MCF 10A (cell line): ENCODE measurements at regions of chr20 and their contacts with region 1.

Region 1: GRCh38 chr20:18252597-18253451 is 35.5 kb upstream of the ZNF133 start:
- DNase-seq: peak; percentile 91
- H3K4me3 Mint-ChIP-seq: peak overlapping the region; percentile 52
- H3K27ac Mint-ChIP-seq: peak overlapping the region; percentile 100
- H3K4me1 Mint-ChIP-seq: peaks cover 30% of the 10 kb centered on the region
- H3K27me3 Mint-ChIP-seq: no peaks in the 10 kb centered on the region
- CTCF ChIP-seq: no peak

Region 2: DNA sequence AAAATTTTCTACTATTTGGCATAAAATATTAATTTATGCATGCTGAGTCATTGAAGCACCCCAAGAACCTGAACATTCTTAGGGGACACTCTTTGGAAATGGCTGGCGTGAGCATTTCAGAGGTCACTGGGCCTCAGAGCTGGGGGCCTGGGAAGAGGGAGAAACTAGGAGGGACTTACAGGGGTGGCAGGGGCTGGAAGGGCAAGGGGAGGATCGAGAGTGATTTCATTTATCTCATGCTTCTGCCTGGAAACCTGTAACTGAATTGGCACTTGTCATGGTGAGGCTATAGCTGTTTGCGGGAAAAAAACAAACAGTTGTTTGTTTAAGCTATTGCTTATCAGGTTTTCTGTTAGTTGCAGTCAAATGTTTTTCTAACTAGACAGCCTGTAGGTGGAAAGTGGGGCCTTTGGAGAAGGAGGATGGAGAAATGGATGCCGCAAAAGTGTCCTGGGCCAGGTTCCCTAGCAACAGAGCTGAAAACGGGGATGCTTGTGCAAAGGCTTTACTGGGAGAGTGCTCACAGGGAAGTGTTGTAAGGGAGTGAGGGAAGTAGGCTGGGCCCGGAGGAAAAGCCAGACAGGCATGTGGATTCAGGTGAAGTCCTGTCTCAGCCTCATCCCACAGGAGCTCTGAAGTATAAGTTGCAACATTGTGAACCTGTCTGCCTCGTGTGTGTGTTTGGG is 151.6 kb before region 1 on chr20:
- CTCF ChIA-PET with region 1: no interaction called
- POLR2A ChIA-PET with region 1: no interaction called
- intact Hi-C with region 1: no loop called
- DNase-seq: no peak
- H3K4me3 Mint-ChIP-seq: no peak overlapping the region
- H3K27ac Mint-ChIP-seq: no peak overlapping the region
- H3K4me1 Mint-ChIP-seq: no peaks in the 10 kb centered on the region
- H3K27me3 Mint-ChIP-seq: no peaks in the 10 kb centered on the region
- CTCF ChIP-seq: no peak

Region 3: DNA sequence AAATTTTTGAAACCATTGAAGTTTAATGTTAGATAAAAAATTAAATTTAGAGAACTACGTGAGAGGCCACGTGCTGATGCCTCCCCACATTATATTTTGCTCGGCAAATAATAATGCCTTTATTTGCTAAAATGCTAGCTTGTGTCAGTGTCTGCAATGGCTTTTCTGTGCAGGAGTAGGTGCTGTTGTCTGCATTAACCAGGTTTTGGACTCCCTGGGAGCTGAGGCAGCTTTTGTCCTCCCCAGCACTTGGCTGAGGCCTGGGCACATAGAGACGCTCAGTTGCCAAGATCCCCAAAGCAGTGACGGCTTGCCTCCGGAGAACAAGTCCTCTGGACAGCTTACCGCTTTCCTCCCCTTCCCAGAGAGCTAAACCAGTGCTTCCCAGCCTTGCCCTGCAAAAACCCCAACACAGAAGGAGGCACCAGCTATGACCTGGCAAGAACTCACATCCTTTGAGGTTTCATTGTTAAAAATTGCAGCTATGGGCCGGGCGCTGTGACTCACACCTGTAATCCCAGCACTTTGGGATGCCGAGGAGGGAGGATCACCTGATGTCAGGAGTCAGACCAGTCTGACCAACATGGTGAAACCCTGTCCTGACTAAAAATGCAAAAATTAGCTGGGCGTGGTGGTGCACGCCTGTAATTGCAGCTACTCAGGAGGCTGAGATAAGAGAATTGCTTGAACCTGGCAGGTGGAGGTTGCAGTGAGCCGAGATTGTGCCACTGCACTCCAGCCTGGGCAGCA is 55.3 kb before region 1 on chr20:
- CTCF ChIA-PET with region 1: interaction called, 18 read pairs
- POLR2A ChIA-PET with region 1: interaction called, 58 read pairs
- intact Hi-C with region 1: loop called (anchors 1 kb)
- DNase-seq: peak; percentile 87
- H3K4me3 Mint-ChIP-seq: no peak overlapping the region
- H3K27ac Mint-ChIP-seq: peak overlapping the region; percentile 89
- H3K4me1 Mint-ChIP-seq: no peaks in the 10 kb centered on the region
- H3K27me3 Mint-ChIP-seq: no peaks in the 10 kb centered on the region
- CTCF ChIP-seq: peak; percentile 18

Region 4: DNA sequence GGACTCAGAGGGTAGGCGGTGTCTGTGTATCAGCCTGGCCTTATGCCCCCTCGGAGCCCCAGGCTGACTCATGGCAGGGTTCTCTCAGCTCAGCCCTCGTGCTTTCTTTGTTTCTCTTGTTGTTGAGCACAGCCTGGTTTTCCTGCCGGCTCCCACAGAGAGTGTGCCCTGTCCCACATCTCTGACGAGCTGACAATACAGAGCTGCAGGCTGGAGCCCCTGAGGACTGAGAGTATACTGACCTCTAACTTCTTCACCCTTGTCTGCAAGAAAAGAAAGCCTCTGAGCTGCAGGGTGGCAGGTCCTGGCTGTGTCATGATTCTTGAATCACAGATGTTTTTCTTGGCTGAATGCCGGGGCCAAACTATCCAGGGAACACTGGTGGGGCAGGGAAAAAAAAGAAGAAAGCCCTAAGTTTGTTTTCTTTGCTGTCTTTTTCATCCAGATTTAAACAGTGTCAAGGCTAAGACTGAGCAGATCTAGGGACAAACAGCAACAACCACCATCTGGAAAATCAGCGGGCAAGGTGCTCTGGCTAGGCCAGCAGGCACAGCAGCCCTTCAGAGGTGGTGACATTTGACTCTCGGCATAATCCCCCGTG is 27.8 kb before region 1 on chr20:
- CTCF ChIA-PET with region 1: interaction called, 5 read pairs
- POLR2A ChIA-PET with region 1: interaction called, 84 read pairs
- intact Hi-C with region 1: loop called (anchors 1 kb)
- DNase-seq: peak; percentile 91
- H3K4me3 Mint-ChIP-seq: peak overlapping the region; percentile 63
- H3K27ac Mint-ChIP-seq: peak overlapping the region; percentile 92
- H3K4me1 Mint-ChIP-seq: peaks cover 21% of the 10 kb centered on the region
- H3K27me3 Mint-ChIP-seq: no peaks in the 10 kb centered on the region
- CTCF ChIP-seq: no peak

Region 5: GRCh38 chr20:18263723-18264122 is 10.9 kb after region 1 on chr20:
- CTCF ChIA-PET with region 1: interaction called, 4 read pairs
- POLR2A ChIA-PET with region 1: interaction called, 26 read pairs
- intact Hi-C with region 1: no loop called
- DNase-seq: peak; percentile 23
- H3K4me3 Mint-ChIP-seq: no peak overlapping the region
- H3K27ac Mint-ChIP-seq: no peak overlapping the region
- H3K4me1 Mint-ChIP-seq: peaks cover 7% of the 10 kb centered on the region
- H3K27me3 Mint-ChIP-seq: no peaks in the 10 kb centered on the region
- CTCF ChIP-seq: no peak

Region 6: GRCh38 chr20:18299364-18299763 is 46.5 kb after region 1 on chr20:
- CTCF ChIA-PET with region 1: no interaction called
- POLR2A ChIA-PET with region 1: no interaction called
- intact Hi-C with region 1: no loop called
- DNase-seq: no peak
- H3K4me3 Mint-ChIP-seq: no peak overlapping the region
- H3K27ac Mint-ChIP-seq: peak overlapping the region; percentile 63
- H3K4me1 Mint-ChIP-seq: no peaks in the 10 kb centered on the region
- H3K27me3 Mint-ChIP-seq: no peaks in the 10 kb centered on the region
- CTCF ChIP-seq: no peak

Region 7: GRCh38 chr20:18388860-18389259 is 136.0 kb after region 1 on chr20:
- CTCF ChIA-PET with region 1: no interaction called
- POLR2A ChIA-PET with region 1: no interaction called
- intact Hi-C with region 1: no loop called
- DNase-seq: peak; percentile 28
- H3K4me3 Mint-ChIP-seq: no peak overlapping the region
- H3K27ac Mint-ChIP-seq: no peak overlapping the region
- H3K4me1 Mint-ChIP-seq: peaks cover 7% of the 10 kb centered on the region
- H3K27me3 Mint-ChIP-seq: no peaks in the 10 kb centered on the region
- CTCF ChIP-seq: no peak

Region 8: DNA sequence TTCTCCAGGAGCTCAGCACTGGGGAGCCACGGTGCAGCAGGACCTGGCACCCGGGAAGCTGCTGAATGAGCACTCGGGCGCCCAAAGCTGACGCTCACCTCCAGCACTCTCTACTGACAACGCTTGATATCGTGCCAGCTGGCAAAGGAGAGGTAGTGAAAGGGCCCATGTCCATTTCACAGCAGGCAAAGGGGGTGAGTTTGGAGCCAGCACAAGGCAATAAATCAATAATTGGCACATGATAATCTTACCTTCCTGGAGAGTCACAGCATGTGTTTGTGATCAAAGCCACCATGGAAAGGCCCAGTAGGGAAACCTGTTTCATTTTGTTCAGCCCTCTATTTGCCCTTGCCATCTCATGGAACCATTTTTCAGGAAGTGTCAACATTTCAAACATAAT is 291.1 kb after region 1 on chr20:
- CTCF ChIA-PET with region 1: no interaction called
- POLR2A ChIA-PET with region 1: no interaction called
- intact Hi-C with region 1: no loop called
- DNase-seq: no peak
- H3K4me3 Mint-ChIP-seq: no peak overlapping the region
- H3K27ac Mint-ChIP-seq: no peak overlapping the region
- H3K4me1 Mint-ChIP-seq: peaks cover 7% of the 10 kb centered on the region
- H3K27me3 Mint-ChIP-seq: no peaks in the 10 kb centered on the region
- CTCF ChIP-seq: no peak